ENCODE measurements at regions of chr1 and their contacts with region 1.

Region 1: GRCh38 chr1:202888531-202889360 is at the start of gene RABIF:
- DNase-seq: peak; percentile 98
- ATAC-seq: peak; percentile 92
- H3K4me3 ChIP-seq: peak within 1 kb of the TSS; percentile 65 to 87 (median 78)
- H3K4me3 Mint-ChIP-seq: peak within 1 kb of the TSS; percentile 91
- H3K27ac ChIP-seq: peak within 1 kb of the TSS; percentile 85 to 89
- H3K27ac Mint-ChIP-seq: peak within 1 kb of the TSS; percentile 96
- H3K4me1 ChIP-seq: peaks cover 11 to 17% of the 10 kb centered on the region in 2 donors
- H3K4me1 Mint-ChIP-seq: peaks cover 18% of the 10 kb centered on the region
- H3K27me3 ChIP-seq: no peaks in the 10 kb centered on the region
- H3K27me3 Mint-ChIP-seq: no peaks in the 10 kb centered on the region
- CTCF ChIP-seq: no peak
- total RNA-seq, gene RABIF: 14.2 and 16.5 TPM in 2 replicates

Region 2: GRCh38 chr1:201982623-201983379 is 905.9 kb before region 1 on chr1 and contains the start of gene RNPEP:
- CTCF ChIA-PET with region 1: no interaction called
- POLR2A ChIA-PET with region 1: no interaction called
- intact Hi-C with region 1: loop called (anchors 2 kb)
- DNase-seq: peak; percentile 79
- ATAC-seq: peak; percentile 78
- H3K4me3 ChIP-seq: peak within 1 kb of the TSS; percentile 53 to 94 (median 67)
- H3K4me3 Mint-ChIP-seq: peak within 1 kb of the TSS; percentile 97
- H3K27ac ChIP-seq: peak within 1 kb of the TSS; percentile 6 to 54
- H3K27ac Mint-ChIP-seq: peak within 1 kb of the TSS; percentile 92
- H3K4me1 ChIP-seq: peaks cover 11 to 13% of the 10 kb centered on the region in 2 donors
- H3K4me1 Mint-ChIP-seq: peaks cover 27% of the 10 kb centered on the region
- H3K27me3 ChIP-seq: no peaks in the 10 kb centered on the region
- H3K27me3 Mint-ChIP-seq: no peaks in the 10 kb centered on the region
- CTCF ChIP-seq: no peak
- total RNA-seq, gene RNPEP: 42.9 and 43.1 TPM in 2 replicates

Region 3: GRCh38 chr1:202835548-202836090 is 53.1 kb before region 1 on chr1:
- CTCF ChIA-PET with region 1: no interaction called
- POLR2A ChIA-PET with region 1: no interaction called
- intact Hi-C with region 1: no loop called
- DNase-seq: no peak
- ATAC-seq: no peak
- H3K4me3 ChIP-seq: no peak overlapping the region
- H3K4me3 Mint-ChIP-seq: no peak overlapping the region
- H3K27ac ChIP-seq: no peak overlapping the region
- H3K27ac Mint-ChIP-seq: no peak overlapping the region
- H3K4me1 ChIP-seq: peaks cover 19 to 29% of the 10 kb centered on the region in 2 donors
- H3K4me1 Mint-ChIP-seq: peaks cover 22% of the 10 kb centered on the region
- H3K27me3 ChIP-seq: peaks cover 0 to 4% (median 0%) of the 10 kb centered on the region in 4 experiments
- H3K27me3 Mint-ChIP-seq: peaks cover 8% of the 10 kb centered on the region
- CTCF ChIP-seq: no peak

Region 4: DNA sequence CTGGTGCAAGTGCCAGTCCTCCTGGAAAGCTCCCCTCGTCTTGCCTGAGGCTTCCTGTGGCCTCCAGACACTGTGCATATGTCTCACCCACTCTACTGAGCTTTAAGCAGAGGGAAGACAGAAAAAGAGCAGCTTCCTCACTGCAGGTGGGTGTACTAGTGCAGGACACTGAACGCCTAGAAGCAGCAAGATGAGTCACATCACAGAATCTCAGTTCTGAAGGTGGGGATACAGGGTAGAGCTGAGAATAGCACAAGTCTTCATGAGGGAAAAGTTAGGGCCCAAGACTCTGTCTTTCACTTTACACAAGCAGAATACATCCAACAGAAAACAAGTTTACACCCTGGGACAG is 40.6 kb before region 1 on chr1:
- CTCF ChIA-PET with region 1: no interaction called
- POLR2A ChIA-PET with region 1: no interaction called
- intact Hi-C with region 1: no loop called
- DNase-seq: no peak
- ATAC-seq: peak; percentile 58
- H3K4me3 ChIP-seq: no peak overlapping the region
- H3K4me3 Mint-ChIP-seq: no peak overlapping the region
- H3K27ac ChIP-seq: no peak overlapping the region
- H3K27ac Mint-ChIP-seq: peak overlapping the region; percentile 33
- H3K4me1 ChIP-seq: peaks cover 6 to 22% of the 10 kb centered on the region in 2 donors
- H3K4me1 Mint-ChIP-seq: peaks cover 28% of the 10 kb centered on the region
- H3K27me3 ChIP-seq: no peaks in the 10 kb centered on the region
- H3K27me3 Mint-ChIP-seq: peaks cover 3% of the 10 kb centered on the region
- CTCF ChIP-seq: no peak

Region 5: GRCh38 chr1:202861420-202862200 is 27.1 kb before region 1 on chr1:
- CTCF ChIA-PET with region 1: interaction called, 3 read pairs
- POLR2A ChIA-PET with region 1: no interaction called
- intact Hi-C with region 1: loop called (anchors 1 kb)
- DNase-seq: peak; percentile 63
- ATAC-seq: peak; percentile 97
- H3K4me3 ChIP-seq: peak overlapping the region; percentile 54 to 66 (median 61)
- H3K4me3 Mint-ChIP-seq: peak overlapping the region; percentile 88
- H3K27ac ChIP-seq: no peak overlapping the region
- H3K27ac Mint-ChIP-seq: no peak overlapping the region
- H3K4me1 ChIP-seq: peaks cover 10 to 16% of the 10 kb centered on the region in 2 donors
- H3K4me1 Mint-ChIP-seq: peaks cover 14% of the 10 kb centered on the region
- H3K27me3 ChIP-seq: peaks cover 0 to 26% (median 10%) of the 10 kb centered on the region in 4 experiments
- H3K27me3 Mint-ChIP-seq: peaks cover 20% of the 10 kb centered on the region
- CTCF ChIP-seq: no peak

Region 6: DNA sequence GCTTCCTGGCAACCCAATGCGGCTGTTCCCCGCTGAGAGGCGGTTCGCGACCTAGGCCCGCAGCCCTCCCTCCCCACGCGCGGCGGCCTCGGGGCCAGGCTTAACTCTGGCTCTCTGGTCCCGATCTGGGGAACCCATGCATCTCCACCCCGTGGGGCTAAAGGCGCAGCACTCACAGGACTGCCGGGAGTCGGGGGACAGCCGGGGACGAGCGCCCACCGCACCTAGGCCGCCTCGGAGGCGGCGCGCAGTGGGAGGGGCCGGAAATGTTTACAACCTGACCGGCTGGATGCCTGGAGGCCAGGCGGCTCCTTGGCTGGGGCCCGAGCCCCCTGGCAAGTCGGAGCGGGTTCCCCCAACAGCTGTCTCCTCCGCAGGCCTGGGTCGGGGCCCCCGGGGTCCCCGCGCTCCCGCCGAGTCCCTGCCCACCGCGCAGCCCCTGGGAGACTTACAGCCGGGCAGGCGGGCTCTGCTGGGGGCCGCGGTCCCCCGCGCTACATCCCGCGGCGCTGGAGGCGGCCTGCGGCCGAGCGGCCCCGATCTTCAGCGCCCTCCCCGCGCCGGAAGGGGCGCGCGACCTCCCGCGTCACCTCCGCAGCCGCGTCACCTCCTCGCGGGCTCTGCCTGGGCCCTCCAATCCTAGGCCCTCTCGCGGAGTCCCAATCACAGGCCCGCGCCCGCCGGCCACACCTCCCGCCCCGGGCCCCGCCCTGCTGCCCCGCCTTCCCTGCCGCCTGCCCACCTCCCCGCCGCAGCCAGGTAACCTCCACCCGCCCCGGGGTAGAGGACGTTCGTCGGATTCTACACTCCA is 69.2 kb after region 1 on chr1 and contains the start of gene ADIPOR1:
- CTCF ChIA-PET with region 1: no interaction called
- POLR2A ChIA-PET with region 1: no interaction called
- intact Hi-C with region 1: loop called (anchors 2 kb)
- DNase-seq: peak; percentile 92
- ATAC-seq: peak; percentile 98
- H3K4me3 ChIP-seq: peak within 1 kb of the TSS; percentile 79 to 93 (median 87)
- H3K4me3 Mint-ChIP-seq: peak within 1 kb of the TSS; percentile 90
- H3K27ac ChIP-seq: peak within 1 kb of the TSS; percentile 79 to 95
- H3K27ac Mint-ChIP-seq: peak within 1 kb of the TSS; percentile 86
- H3K4me1 ChIP-seq: peaks cover 25 to 27% of the 10 kb centered on the region in 2 donors
- H3K4me1 Mint-ChIP-seq: peaks cover 40% of the 10 kb centered on the region
- H3K27me3 ChIP-seq: no peaks in the 10 kb centered on the region
- H3K27me3 Mint-ChIP-seq: no peaks in the 10 kb centered on the region
- CTCF ChIP-seq: no peak
- total RNA-seq, gene ADIPOR1: 44.2 and 46.6 TPM in 2 replicates

Region 7: DNA sequence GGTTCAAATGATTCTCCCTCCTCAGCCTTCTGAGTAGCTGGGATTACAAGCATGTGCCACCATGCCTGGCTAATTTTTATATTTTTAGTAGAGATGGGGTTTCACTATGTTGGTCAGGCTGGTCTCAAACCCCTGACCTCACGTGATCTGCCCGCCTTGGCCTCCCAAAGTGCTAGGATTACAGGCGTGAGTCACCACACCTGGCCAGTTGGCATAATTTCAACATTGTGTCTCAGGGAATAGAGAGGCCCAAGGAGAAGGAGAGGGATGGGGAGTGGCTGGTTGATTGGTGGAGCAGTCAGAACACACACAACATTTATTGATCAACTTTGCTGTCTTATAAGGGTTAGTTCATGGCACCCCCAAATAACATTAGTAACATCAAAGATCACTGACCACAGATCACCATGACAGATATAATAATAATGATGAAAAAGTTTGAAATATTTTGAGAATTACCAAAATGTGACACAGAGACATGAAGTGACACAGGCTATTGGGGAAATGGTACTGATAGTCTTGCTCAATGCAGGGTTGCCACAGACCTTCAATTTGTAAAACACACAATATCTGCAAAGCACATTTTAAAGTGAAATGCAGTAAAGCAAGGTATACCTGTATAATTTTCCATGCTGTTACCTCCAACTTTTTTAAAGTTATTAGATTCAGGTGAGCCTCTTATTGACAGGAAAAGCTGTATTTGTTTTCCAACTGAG is 94.1 kb after region 1 on chr1:
- CTCF ChIA-PET with region 1: no interaction called
- POLR2A ChIA-PET with region 1: no interaction called
- intact Hi-C with region 1: no loop called
- DNase-seq: no peak
- ATAC-seq: no peak
- H3K4me3 ChIP-seq: no peak overlapping the region
- H3K4me3 Mint-ChIP-seq: no peak overlapping the region
- H3K27ac ChIP-seq: no peak overlapping the region
- H3K27ac Mint-ChIP-seq: no peak overlapping the region
- H3K4me1 ChIP-seq: no peaks in the 10 kb centered on the region
- H3K4me1 Mint-ChIP-seq: peaks cover 8% of the 10 kb centered on the region
- H3K27me3 ChIP-seq: peaks cover 0 to 2% (median 0%) of the 10 kb centered on the region in 4 experiments
- H3K27me3 Mint-ChIP-seq: peaks cover 12% of the 10 kb centered on the region
- CTCF ChIP-seq: no peak

Region 8: DNA sequence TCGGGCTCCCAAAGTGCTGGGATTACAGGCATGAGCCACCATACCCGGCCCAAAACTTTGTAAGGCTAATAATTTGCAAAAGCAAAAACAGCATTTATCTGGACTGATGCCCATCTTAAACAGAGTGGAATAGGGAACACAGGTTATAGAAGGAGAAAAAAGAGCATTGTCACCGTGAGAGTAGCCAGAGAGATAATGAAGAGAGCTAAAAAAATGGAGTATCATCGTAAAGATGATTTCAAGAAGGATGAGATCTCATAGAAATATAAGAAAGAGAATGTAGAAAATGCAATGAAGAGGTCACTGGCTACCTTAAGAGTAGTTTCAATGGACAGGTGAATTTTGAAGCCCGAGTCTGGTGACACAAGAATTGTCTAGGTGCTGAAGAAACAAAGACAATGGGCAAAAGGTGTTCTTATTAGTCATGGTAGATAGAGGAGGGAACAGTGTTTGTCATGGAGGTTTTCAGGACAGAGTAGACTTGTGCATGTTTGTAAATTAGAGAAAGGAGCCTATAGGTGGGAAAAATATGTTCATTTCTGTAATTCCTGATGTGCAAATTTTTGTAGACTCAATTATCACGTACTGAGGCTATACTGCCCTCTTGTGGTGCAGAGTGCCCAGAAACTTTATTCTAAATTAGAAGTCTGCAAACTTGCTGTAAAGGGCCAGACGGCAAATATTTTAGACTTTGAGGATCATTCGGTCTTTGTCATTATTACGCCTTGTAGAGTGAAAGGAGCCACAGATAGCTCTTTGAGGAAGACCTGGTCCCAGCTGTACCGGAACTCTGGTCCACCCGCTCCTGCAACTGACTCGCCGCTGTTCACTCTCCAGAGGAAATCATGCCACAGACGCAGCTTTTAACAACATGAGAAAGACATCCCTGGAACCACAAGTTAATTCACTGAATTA is 110.3 kb after region 1 on chr1:
- CTCF ChIA-PET with region 1: interaction called, 3 read pairs
- POLR2A ChIA-PET with region 1: no interaction called
- intact Hi-C with region 1: loop called (anchors 2 kb)
- DNase-seq: peak; percentile 82
- ATAC-seq: peak; percentile 45
- H3K4me3 ChIP-seq: peak overlapping the region in 3 of 5 experiments; percentile 32 to 40 (median 37)
- H3K4me3 Mint-ChIP-seq: peak overlapping the region; percentile 72
- H3K27ac ChIP-seq: peak overlapping the region; percentile 57 to 64
- H3K27ac Mint-ChIP-seq: peak overlapping the region; percentile 83
- H3K4me1 ChIP-seq: peaks cover 14 to 15% of the 10 kb centered on the region in 2 donors
- H3K4me1 Mint-ChIP-seq: peaks cover 16% of the 10 kb centered on the region
- H3K27me3 ChIP-seq: no peaks in the 10 kb centered on the region
- H3K27me3 Mint-ChIP-seq: peaks cover 4% of the 10 kb centered on the region
- CTCF ChIP-seq: peak; percentile 93

Region 9: DNA sequence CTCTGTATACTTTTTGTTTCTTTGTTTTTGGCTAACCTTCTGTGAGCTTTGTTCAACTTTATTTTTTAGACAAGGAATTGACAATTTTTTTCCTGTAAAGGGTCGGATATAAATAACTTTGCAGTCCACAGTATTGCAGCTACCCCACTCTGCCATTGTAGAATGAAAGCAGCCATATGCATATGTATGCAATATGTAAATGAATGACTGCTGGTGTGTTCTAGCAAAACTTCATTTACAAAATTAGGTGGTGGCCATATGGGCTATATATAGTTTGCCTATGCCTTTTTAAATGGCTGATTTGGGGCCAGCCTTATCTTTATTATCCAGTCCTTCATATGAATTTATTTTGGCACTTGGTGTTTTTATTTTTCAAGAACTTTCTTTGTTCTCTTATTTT is 954.7 kb after region 1 on chr1:
- CTCF ChIA-PET with region 1: no interaction called
- POLR2A ChIA-PET with region 1: no interaction called
- intact Hi-C with region 1: no loop called
- DNase-seq: no peak
- ATAC-seq: no peak
- H3K4me3 ChIP-seq: no peak overlapping the region
- H3K4me3 Mint-ChIP-seq: no peak overlapping the region
- H3K27ac ChIP-seq: no peak overlapping the region
- H3K27ac Mint-ChIP-seq: no peak overlapping the region
- H3K4me1 ChIP-seq: no peaks in the 10 kb centered on the region
- H3K4me1 Mint-ChIP-seq: no peaks in the 10 kb centered on the region
- H3K27me3 ChIP-seq: no peaks in the 10 kb centered on the region
- H3K27me3 Mint-ChIP-seq: no peaks in the 10 kb centered on the region
- CTCF ChIP-seq: no peak